Prostate gland (tissue), 2 donors: ENCODE measurements at regions of chr19 and their contacts with region 1.

Region 1: DNA sequence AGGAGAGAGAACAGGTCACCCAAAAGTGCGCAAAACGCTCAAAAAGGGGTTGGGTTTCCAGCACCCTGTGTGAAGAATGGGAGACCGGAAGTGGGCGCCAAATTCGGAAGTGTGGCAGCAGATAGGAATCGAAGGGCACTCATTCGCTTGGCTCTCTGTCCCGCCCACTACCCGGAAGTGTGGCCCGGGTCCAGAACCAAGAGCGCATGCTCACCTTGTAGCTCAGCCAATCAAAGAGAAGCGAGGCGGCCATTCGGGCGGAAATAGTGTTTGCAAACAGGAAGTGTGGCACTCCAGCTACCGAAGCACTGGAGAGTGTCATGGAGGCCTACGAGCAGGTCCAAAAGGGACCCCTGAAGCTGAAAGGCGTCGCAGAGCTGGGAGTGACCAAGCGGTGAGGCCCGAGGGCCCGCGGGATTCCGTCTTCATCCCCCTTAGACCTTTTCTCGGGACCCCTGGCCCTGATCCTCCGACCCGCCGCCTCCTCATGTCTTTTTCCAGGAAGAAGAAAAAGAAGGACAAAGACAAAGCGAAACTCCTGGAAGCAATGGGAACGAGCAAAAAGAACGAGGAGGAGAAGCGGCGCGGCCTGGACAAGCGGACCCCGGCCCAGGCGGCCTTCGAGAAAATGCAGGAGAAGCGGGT is at the start of gene FAM32A:
- DNase-seq: peak; percentile 97
- H3K4me3 ChIP-seq: peak within 1 kb of the TSS; percentile 83 to 99
- H3K27ac ChIP-seq: peak within 1 kb of the TSS; percentile 74 to 83
- H3K4me1 ChIP-seq: peaks cover 5% of the 10 kb centered on the region
- H3K27me3 ChIP-seq: no peaks in the 10 kb centered on the region
- CTCF ChIP-seq: peak; percentile 10 to 58 (median 36)
- POLR2A ChIP-seq: peak; percentile 62
- total RNA-seq, gene FAM32A: 98.1 to 103 TPM

Region 2: DNA sequence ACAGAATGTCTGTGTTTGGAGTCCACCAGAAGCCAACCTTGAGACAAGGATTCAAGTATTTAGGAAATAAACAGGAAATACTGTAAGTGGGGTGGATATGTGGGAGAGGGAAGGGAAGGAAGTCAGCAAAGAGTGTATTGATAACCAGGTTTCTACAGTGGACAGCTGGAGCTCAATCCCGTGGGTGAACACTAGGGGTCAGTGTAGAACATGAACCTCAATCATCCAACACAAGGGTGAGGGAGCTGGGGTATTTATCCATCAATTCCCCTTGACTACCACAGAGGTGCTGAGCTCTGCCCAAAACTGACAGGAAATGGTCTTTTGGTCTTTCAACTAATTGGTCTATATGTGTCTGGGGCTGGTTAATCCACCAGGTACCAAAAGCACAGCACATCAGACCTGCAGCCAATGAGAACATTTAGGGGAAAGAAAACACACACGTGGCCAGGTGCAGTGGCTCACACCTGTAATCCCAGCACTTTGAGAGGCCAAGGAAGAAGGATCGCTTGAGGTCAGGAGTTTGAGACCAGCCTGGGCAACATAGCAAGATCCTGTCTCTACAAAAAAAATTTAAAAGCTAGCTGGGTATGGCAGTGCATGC is 1083.7 kb before region 1 on chr19:
- intact Hi-C with region 1: loop called (anchors 10 kb)
- DNase-seq: no peak
- H3K4me3 ChIP-seq: no peak overlapping the region
- H3K27ac ChIP-seq: no peak overlapping the region
- H3K4me1 ChIP-seq: no peaks in the 10 kb centered on the region
- H3K27me3 ChIP-seq: no peaks in the 10 kb centered on the region
- CTCF ChIP-seq: peak in 3 of 4 experiments; percentile 43 to 61 (median 49)
- POLR2A ChIP-seq: no peak

Region 3: GRCh38 chr19:16041299-16041990 is 143.8 kb before region 1 on chr19:
- intact Hi-C with region 1: loop called (anchors 2 kb)
- DNase-seq: peak; percentile 79
- H3K4me3 ChIP-seq: no peak overlapping the region
- H3K27ac ChIP-seq: no peak overlapping the region
- H3K4me1 ChIP-seq: no peaks in the 10 kb centered on the region
- H3K27me3 ChIP-seq: no peaks in the 10 kb centered on the region
- CTCF ChIP-seq: peak; percentile 91 to 98 (median 97)
- POLR2A ChIP-seq: no peak

Region 4: DNA sequence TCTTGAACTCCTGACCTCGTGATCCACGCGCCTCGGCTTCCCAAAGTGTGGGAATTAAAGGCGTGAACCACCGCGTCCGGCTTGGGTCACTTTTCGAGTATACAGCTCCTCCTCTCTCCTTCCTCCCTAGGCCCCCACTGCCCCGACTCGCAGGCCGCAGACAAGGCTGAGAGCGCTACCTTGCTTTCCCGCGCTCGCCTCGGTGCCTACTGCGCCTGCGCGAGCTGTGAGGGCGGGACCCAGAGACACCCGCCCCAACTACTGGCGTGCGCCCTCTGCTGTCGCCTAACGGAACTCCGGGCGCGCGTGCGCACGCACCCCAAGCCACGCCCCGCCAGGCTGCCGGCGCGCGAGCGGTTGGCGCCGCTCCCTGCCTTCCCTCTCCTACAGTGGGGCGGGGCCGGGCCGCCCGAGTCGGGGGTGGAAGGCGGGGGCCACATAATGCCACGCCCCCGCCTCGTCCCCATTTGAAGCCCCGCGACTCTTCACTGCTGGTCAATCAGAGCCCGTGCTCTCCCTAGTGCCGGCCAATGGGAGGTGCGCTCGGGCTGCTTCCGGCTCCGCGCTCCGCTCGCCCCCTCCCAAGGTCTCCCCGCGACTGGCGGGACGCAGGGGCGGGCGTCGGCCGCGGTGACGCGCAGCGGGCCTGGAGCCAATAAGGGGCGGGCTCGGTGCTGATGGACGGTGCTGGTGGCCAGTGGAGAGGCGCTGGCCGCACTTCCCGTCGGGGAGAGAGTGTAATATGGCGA is 73.9 kb before region 1 on chr19 and contains the start of gene RAB8A:
- intact Hi-C with region 1: loop called (anchors 5 kb)
- DNase-seq: peak; percentile 99
- H3K4me3 ChIP-seq: peak within 1 kb of the TSS; percentile 97
- H3K27ac ChIP-seq: peak within 1 kb of the TSS; percentile 93 to 98
- H3K4me1 ChIP-seq: peaks cover 5% of the 10 kb centered on the region
- H3K27me3 ChIP-seq: no peaks in the 10 kb centered on the region
- CTCF ChIP-seq: peak; percentile 92 to 100 (median 99)
- POLR2A ChIP-seq: peak; percentile 7
- total RNA-seq, gene RAB8A: 67.8 to 70.5 TPM